Naive thymus-derived CD4-positive, alpha-beta T cell (primary cell): ENCODE measurements at regions of chr11 and their contacts with region 1.

Region 1: GRCh38 chr11:118338637-118339061 is 3.9 kb downstream of the CD3D start:
- DNase-seq: peak; percentile 46 to 99 (median 92)
- ATAC-seq: peak; percentile 82
- H3K4me3 ChIP-seq: peak overlapping the region; percentile 88
- H3K4me3 Mint-ChIP-seq: peak overlapping the region; percentile 89 to 98 (median 96)
- H3K27ac ChIP-seq: peak overlapping the region; percentile 96
- H3K27ac Mint-ChIP-seq: peak overlapping the region; percentile 95 to 100 (median 99)
- H3K4me1 ChIP-seq: peaks cover 46 to 50% of the 10 kb centered on the region in 2 donors
- H3K4me1 Mint-ChIP-seq: peaks cover 28 to 68% (median 55%) of the 10 kb centered on the region in 7 donors
- H3K27me3 ChIP-seq: no peaks in the 10 kb centered on the region
- H3K27me3 Mint-ChIP-seq: no peaks in the 10 kb centered on the region

Region 2: DNA sequence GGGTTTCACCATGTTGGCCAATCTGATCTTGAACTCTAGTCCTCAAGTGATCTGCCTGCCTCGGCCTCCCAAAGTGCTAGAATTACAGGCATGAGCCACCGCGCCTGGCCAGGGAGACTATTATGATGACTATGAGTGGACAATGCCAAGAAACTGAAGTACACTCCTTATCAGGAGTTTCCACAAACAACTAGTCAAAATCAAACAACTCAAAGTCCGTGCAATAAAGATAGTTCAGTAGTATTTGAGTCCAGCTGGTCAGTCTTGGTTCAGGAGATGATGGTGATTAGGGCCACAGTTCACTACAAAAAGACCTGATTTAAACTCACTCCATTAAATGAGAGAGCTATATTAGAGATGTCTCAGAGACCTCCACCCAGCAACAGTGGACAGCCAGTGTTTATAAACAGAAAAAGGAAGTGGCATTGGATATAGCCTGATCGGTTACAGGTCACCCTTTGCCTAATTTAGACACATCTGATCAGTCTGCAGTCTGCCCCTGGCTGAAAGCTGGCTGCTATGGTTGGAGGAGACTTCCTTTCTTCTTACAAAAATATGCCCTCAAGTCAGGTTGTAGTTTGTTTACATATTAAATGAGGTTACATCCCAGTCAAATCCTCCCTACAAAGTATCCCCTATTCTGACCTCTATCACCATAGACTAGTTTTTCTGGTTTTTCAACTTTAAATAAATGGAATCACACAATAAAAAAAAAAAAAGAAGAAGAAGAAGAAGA is 17.1 kb before region 1 on chr11:
- CTCF ChIA-PET with region 1: interaction called, 5 read pairs
- POLR2A ChIA-PET with region 1: no interaction called
- intact Hi-C with region 1: loop called in 1 of 2 experiments (anchors 1 kb)
- DNase-seq: no peak
- ATAC-seq: no peak
- H3K4me3 ChIP-seq: no peak overlapping the region
- H3K4me3 Mint-ChIP-seq: peak overlapping the region in 8 of 10 donors; percentile 13 to 87 (median 53)
- H3K27ac ChIP-seq: no peak overlapping the region
- H3K27ac Mint-ChIP-seq: peak overlapping the region; percentile 60 to 100 (median 80)
- H3K4me1 ChIP-seq: peaks cover 34 to 63% of the 10 kb centered on the region in 2 donors
- H3K4me1 Mint-ChIP-seq: peaks cover 43 to 90% (median 78%) of the 10 kb centered on the region in 7 donors
- H3K27me3 ChIP-seq: no peaks in the 10 kb centered on the region
- H3K27me3 Mint-ChIP-seq: no peaks in the 10 kb centered on the region

Region 3: DNA sequence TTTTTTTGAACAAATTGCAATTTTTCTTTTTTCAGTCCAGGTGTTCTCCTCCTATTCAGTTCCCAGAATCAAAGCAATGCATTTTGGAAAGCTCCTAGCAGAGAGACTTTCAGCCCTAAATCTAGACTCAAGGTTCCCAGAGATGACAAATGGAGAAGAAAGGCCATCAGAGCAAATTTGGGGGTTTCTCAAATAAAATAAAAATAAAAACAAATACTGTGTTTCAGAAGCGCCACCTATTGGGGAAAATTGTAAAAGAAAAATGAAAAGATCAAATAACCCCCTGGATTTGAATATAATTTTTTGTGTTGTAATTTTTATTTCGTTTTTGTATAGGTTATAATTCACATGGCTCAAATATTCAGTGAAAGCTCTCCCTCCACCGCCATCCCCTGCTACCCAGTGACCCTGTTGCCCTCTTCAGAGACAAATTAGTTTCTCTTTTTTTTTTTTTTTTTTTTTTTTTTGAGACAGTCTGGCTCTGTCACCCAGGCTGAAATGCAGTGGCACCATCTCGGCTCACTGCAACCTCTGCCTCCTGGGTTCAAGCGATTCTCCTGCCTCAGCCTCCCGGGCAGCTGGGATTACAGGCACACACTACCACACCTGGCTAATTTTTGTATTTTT is 14.5 kb after region 1 on chr11:
- CTCF ChIA-PET with region 1: interaction called, 6 read pairs
- POLR2A ChIA-PET with region 1: interaction called, 24 read pairs
- intact Hi-C with region 1: loop called in 1 of 2 experiments (anchors 2 kb)
- DNase-seq: peak in 7 of 9 donors; percentile 21 to 70 (median 61)
- ATAC-seq: peak; percentile 51
- H3K4me3 ChIP-seq: no peak overlapping the region
- H3K4me3 Mint-ChIP-seq: no peak overlapping the region
- H3K27ac ChIP-seq: peak overlapping the region; percentile 62
- H3K27ac Mint-ChIP-seq: peak overlapping the region; percentile 38 to 96 (median 91)
- H3K4me1 ChIP-seq: peaks cover 13 to 15% of the 10 kb centered on the region in 2 donors
- H3K4me1 Mint-ChIP-seq: peaks cover 5 to 53% (median 35%) of the 10 kb centered on the region in 7 donors
- H3K27me3 ChIP-seq: no peaks in the 10 kb centered on the region
- H3K27me3 Mint-ChIP-seq: no peaks in the 10 kb centered on the region

Region 4: DNA sequence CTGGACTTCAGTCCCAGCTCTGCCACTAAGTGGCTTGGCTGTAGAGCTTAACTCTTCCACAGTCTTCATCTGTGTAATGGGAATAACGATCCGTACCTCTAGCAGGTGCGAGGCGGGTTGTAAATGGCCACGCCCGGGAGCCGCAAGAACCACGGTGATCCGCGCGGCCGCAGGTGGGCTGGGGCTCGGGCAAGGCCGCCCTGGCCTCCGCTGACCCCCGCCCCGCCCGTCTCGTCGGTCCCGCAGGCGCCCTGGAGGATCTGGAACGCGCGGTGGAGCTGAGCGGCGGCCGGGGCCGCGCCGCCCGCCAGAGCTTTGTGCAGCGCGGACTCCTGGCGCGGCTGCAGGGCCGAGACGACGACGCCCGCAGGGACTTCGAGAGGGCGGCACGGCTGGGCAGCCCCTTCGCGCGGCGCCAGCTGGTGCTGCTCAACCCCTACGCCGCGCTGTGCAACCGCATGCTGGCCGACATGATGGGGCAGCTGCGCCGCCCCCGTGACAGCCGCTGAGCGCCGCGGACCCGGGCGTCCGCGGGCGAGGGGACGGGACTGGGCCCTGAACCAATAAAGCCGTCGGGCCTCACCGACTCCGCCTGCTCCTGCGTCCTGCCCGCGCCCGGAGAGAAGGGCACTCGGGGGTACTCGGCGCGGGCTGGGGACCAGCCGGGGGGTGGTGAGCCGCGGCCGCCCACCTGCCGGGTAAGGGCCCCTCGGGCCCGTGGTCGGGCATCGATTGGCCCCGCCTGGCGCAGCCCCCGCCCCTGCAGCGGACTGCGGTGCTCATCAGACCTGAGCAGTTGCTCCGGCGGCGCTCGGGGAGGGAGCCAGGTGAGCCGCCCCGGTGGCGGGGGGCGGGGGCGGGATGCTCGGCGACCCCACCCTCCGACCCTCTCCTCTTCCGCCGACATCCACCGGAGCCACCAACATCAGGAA is 192.0 kb after region 1 on chr11 and contains the start of gene TMEM25:
- CTCF ChIA-PET with region 1: no interaction called
- POLR2A ChIA-PET with region 1: no interaction called
- intact Hi-C with region 1: loop called in 1 of 2 experiments (anchors 1 kb)
- DNase-seq: peak; percentile 55 to 82 (median 73)
- ATAC-seq: peak; percentile 90
- H3K4me3 ChIP-seq: peak within 1 kb of the TSS; percentile 83
- H3K4me3 Mint-ChIP-seq: peak within 1 kb of the TSS; percentile 92 to 99 (median 94)
- H3K27ac ChIP-seq: peak within 1 kb of the TSS; percentile 83
- H3K27ac Mint-ChIP-seq: peak within 1 kb of the TSS; percentile 82 to 96 (median 91)
- H3K4me1 ChIP-seq: peaks cover 13 to 14% of the 10 kb centered on the region in 2 donors
- H3K4me1 Mint-ChIP-seq: peaks cover 24 to 51% (median 45%) of the 10 kb centered on the region in 7 donors
- H3K27me3 ChIP-seq: no peaks in the 10 kb centered on the region
- H3K27me3 Mint-ChIP-seq: peaks cover 0 to 3% (median 0%) of the 10 kb centered on the region in 5 donors
- total RNA-seq, gene TMEM25: 12.1 to 32.8 (median 27.6) TPM

Region 5: DNA sequence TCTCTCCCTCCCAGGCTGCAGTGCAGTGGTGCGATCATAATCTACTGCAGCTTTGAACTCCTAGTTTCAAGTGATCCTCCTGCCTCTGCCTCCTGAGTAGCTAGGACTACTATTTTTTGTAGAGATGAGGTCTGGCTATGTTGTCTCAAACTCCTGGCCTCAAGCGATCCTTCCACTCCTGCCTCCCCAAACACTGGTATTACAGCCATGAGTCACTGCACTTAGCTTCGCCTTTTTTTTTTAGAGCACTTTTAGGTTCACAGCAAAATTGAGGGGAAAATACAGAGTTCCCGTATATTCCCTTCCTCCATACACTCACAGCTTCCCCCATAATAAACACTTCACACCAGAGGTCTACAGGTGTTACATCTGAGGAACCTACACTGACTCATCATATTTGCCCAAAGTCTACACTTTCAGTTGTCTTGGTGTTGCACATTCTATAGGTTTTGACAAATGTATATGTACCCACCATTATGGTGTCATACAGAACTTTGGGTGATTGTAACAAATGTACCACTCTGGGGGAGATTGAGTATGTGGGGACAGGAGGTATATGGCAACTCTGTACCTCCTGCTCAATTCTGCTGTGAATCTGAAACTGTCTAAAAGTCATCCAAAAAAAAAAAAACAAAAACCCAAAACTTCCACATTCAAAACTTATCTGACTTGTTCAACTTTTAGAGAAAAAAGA is 703.3 kb after region 1 on chr11:
- CTCF ChIA-PET with region 1: interaction called, 10 read pairs
- POLR2A ChIA-PET with region 1: no interaction called
- intact Hi-C with region 1: no loop called
- DNase-seq: no peak
- ATAC-seq: no peak
- H3K4me3 ChIP-seq: no peak overlapping the region
- H3K4me3 Mint-ChIP-seq: no peak overlapping the region
- H3K27ac ChIP-seq: no peak overlapping the region
- H3K27ac Mint-ChIP-seq: peak overlapping the region in 2 of 9 donors; percentile 38 to 72
- H3K4me1 ChIP-seq: no peaks in the 10 kb centered on the region
- H3K4me1 Mint-ChIP-seq: peaks cover 0 to 4% (median 0%) of the 10 kb centered on the region in 7 donors
- H3K27me3 ChIP-seq: no peaks in the 10 kb centered on the region
- H3K27me3 Mint-ChIP-seq: no peaks in the 10 kb centered on the region